Activated B cell treated with CpG ODN at 0.5 μM for 24 hours (primary cell): ENCODE measurements at regions of chr1 and their contacts with region 1.

Region 1: DNA sequence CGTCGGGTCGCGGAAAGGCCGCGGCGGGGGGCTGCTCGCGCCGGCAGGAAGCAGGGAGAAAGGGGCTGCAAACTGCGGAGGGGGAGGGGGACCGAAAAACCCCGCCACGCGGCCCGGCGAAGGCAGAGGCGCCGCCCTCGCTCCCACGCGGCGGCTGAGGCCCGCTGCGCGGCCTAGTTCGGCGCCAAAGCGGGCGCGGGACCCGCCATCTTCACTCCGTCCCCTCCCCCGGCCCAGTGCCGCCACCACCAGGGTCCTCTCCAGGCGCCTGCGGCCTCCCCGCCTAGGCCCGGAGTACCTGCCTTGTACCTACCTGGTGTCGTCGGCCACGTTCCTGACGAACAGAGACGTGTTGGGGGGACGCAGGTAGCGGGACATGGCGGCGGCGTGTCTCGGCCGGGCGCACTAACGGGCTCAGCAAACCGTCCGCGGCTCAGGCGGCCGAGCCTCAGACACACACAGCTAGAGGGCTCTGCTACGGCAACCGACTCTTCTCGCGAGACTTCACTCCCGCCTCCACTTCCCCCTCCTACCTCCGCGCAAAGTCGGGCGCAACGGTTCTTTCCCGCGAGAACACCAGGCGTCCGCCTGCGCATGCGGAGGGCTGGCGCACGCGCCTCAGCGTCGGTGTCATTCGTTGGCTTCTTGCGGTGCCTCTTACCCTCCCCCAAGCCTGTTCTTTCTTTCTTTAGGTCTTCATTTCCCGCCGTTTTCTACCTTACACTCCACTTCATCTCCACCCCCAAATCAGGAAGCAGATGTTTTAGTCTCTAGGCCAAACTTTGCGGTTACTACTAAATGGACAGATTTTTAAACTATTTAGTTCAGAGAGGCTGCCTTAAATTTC is at the start of gene SRSF10:
- DNase-seq: peak; percentile 92
- ATAC-seq: peak; percentile 96
- H3K4me3 Mint-ChIP-seq: peak within 1 kb of the TSS; percentile 96
- H3K27ac Mint-ChIP-seq: peak within 1 kb of the TSS; percentile 95
- H3K4me1 Mint-ChIP-seq: peaks cover 54% of the 10 kb centered on the region
- H3K27me3 Mint-ChIP-seq: no peaks in the 10 kb centered on the region
- CTCF ChIP-seq: no peak
- total RNA-seq, gene SRSF10: 168 and 192 TPM in 2 replicates

Region 2: DNA sequence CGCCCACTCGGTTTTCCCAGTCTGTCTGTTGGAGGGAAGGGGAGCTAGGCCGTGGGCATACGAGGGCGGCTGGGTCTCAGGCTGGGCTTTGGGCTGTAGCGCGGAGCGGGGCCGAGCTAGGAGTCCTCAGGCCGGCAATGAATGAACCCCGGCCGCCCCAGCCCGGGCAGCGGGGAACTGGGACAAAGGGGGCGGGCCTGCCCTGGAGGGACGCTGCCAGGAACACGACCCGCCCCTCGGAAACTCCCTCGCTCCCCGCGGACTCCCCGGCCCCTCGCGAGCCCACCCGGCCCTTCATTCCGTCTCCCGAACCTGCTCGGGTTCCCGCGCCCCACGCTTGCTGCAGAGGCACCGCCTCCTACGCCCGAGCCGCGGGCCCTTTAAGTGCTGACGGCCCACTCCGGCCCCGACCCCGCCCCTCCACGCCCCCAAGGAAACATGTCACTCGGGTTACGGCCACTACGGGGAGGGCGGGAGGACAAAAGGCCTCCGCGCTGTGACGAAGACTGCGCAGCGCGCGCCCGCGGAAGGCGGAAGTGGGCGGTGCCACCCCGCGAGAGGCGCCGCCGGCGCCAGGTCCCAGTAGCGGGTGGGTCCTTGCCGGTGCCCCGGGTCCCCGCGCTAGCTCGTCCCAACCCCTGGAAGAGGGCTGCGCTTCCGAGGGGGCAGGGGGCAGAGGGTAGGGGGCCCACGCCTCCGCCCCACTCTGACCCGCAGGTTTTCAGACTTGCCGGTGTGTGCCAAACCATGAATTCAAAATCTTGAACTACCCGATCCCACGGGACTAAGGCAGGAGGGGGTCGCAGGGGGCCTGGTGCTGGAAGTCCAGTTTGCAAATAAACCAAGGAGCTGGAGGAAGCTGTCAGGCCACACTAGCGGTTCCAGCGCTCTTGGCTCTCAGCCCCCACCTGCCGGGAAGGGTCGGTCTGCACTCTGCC is 179.4 kb before region 1 on chr1 and contains the start of gene GALE:
- CTCF ChIA-PET with region 1: no interaction called
- POLR2A ChIA-PET with region 1: interaction called, 5 read pairs
- intact Hi-C with region 1: loop called (anchors 2 kb)
- DNase-seq: peak; percentile 94
- ATAC-seq: peak; percentile 95
- H3K4me3 Mint-ChIP-seq: peak within 1 kb of the TSS; percentile 91
- H3K27ac Mint-ChIP-seq: peak within 1 kb of the TSS; percentile 76
- H3K4me1 Mint-ChIP-seq: peaks cover 21% of the 10 kb centered on the region
- H3K27me3 Mint-ChIP-seq: no peaks in the 10 kb centered on the region
- CTCF ChIP-seq: no peak
- total RNA-seq, gene GALE: 15.9 and 16.4 TPM in 2 replicates

Region 3: DNA sequence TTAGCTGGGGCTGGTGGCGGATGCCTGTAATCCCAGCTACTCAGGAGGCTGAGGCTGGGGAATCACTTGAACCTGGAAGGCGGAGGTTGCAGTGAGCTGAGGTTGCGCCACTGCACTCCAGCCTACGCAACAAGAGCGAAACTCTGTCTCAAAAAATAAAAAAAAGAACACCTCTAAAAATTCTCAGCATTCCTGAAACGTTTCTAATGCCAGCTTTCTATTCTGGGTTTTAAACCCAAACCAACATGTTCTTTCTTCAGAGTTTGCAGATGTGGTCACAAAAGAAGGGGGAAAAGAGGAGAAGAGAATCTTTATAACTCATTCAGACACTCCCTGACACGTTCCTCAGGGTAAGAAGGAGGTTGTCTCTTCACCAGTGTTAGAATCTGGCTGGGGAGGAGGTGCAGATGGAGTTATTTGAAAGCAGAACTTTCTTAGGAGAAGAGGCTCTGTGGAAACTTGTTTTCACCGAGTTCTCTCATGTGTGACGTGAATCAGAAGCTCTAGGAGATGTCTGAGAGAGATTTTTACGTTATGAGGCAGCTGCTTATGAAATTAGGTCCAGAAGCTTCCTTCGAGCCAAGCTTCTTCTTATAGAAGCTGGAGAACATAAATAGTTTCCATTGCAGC is 49.1 kb before region 1 on chr1:
- CTCF ChIA-PET with region 1: no interaction called
- POLR2A ChIA-PET with region 1: interaction called, 16 read pairs
- intact Hi-C with region 1: no loop called
- DNase-seq: no peak
- ATAC-seq: peak; percentile 86
- H3K4me3 Mint-ChIP-seq: peak overlapping the region; percentile 76
- H3K27ac Mint-ChIP-seq: peak overlapping the region; percentile 91
- H3K4me1 Mint-ChIP-seq: peaks cover 43% of the 10 kb centered on the region
- H3K27me3 Mint-ChIP-seq: no peaks in the 10 kb centered on the region
- CTCF ChIP-seq: no peak

Region 4: GRCh38 chr1:23964790-23965740 is 15.0 kb before region 1 on chr1:
- CTCF ChIA-PET with region 1: interaction called, 3 read pairs
- POLR2A ChIA-PET with region 1: interaction called, 73 read pairs
- intact Hi-C with region 1: no loop called
- DNase-seq: no peak
- ATAC-seq: no peak
- H3K4me3 Mint-ChIP-seq: peak overlapping the region; percentile 41
- H3K27ac Mint-ChIP-seq: peak overlapping the region; percentile 77
- H3K4me1 Mint-ChIP-seq: peaks cover 56% of the 10 kb centered on the region
- H3K27me3 Mint-ChIP-seq: no peaks in the 10 kb centered on the region
- CTCF ChIP-seq: no peak

Region 5: DNA sequence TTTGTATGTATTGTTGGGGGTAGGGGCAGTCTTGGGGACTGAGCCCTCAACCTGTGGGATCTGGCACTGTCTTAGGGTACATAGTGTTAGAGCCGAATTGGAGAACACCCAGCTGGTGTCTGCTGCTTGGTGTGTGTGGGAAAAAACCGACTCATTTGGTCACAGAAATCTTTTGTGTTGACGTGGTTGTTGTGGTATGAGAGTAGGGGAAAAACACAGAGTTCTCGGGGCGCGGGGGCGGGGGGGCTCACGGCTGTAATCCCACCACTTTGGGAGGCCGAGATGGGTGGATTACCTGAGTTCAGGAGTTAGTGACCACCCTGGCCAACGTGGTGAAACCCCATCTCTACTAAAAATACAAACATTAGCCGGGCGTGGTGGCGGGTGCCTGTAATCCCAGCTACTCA is 15.3 kb after region 1 on chr1:
- CTCF ChIA-PET with region 1: no interaction called
- POLR2A ChIA-PET with region 1: no interaction called
- intact Hi-C with region 1: no loop called
- DNase-seq: no peak
- ATAC-seq: no peak
- H3K4me3 Mint-ChIP-seq: no peak overlapping the region
- H3K27ac Mint-ChIP-seq: no peak overlapping the region
- H3K4me1 Mint-ChIP-seq: peaks cover 12% of the 10 kb centered on the region
- H3K27me3 Mint-ChIP-seq: no peaks in the 10 kb centered on the region
- CTCF ChIP-seq: no peak

Region 6: DNA sequence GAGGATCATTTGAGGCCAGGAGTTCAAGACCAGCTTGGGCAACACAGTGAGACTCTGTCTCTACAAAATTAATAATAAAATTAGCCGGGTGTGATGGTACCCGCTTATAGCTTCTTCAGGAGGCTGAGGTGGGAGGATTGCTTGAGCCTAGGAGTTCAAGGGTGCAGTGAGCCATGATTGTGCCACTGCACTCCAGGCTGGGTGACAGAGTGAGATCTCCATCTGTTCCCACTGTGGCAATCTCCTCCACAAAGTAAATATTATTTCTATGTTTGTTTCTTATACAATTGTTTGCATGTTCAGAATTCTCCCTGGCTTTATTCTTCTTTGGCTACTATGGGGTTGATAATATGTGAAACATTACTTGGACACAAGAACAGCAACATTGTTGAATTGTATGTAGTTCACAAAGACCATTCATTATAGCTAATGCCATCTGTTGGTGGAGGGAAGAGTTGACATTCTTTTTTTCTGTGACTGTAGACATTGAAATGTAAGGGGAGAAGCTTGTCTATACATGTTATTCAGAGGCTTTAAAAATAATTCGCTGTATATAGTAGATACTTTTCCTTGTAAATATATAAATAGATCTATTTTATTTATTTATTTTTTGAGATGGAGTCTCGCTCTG is 47.9 kb after region 1 on chr1:
- CTCF ChIA-PET with region 1: no interaction called
- POLR2A ChIA-PET with region 1: interaction called, 4 read pairs
- intact Hi-C with region 1: loop called (anchors 1 kb)
- DNase-seq: no peak
- ATAC-seq: no peak
- H3K4me3 Mint-ChIP-seq: no peak overlapping the region
- H3K27ac Mint-ChIP-seq: no peak overlapping the region
- H3K4me1 Mint-ChIP-seq: peaks cover 6% of the 10 kb centered on the region
- H3K27me3 Mint-ChIP-seq: no peaks in the 10 kb centered on the region
- CTCF ChIP-seq: no peak

Region 7: GRCh38 chr1:24373044-24373443 is 392.9 kb after region 1 on chr1:
- CTCF ChIA-PET with region 1: no interaction called
- POLR2A ChIA-PET with region 1: interaction called, 22 read pairs
- intact Hi-C with region 1: no loop called
- DNase-seq: peak; percentile 25
- ATAC-seq: peak; percentile 92
- H3K4me3 Mint-ChIP-seq: peak overlapping the region; percentile 21
- H3K27ac Mint-ChIP-seq: peak overlapping the region; percentile 87
- H3K4me1 Mint-ChIP-seq: peaks cover 20% of the 10 kb centered on the region
- H3K27me3 Mint-ChIP-seq: no peaks in the 10 kb centered on the region
- CTCF ChIP-seq: no peak